Heart right ventricle (tissue), 16 donors: ENCODE measurements at regions of chr9 and their contacts with region 1.

Region 1: GRCh38 chr9:99353408-99353807 is 131.3 kb downstream of the SEC61B start:
- DNase-seq: no peak
- ATAC-seq: no peak
- H3K4me3 ChIP-seq: no peak overlapping the region
- H3K27ac ChIP-seq: peak overlapping the region in 1 of 10 donors; percentile 43
- H3K4me1 ChIP-seq: peaks cover 0 to 23% (median 12%) of the 10 kb centered on the region in 9 donors
- H3K27me3 ChIP-seq: no peaks in the 10 kb centered on the region
- CTCF ChIP-seq: no peak

Region 2: DNA sequence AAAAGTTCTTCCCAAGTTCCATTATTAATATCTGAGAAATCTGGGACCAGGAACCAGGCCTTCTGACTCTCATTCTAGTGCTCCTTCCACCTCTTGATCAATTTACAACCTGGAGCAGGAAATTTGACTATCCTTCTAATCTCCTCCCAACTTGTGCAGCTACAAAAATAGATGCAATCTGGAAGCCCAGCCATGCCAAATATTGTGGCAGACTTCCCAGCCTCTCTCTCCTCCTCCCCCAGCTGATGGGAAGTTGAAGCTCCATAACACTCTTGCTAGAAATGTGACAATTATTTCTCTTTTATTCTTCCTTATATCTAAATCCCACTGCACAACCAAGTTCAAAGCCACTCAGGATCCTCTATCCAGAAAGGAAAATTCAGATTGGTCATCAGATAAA is 120.8 kb after region 1 on chr9:
- intact Hi-C with region 1: loop called in 1 of 10 experiments (anchors 10 kb)
- DNase-seq: peak in 1 of 2 donors; percentile 33
- ATAC-seq: peak in 3 of 8 donors; percentile 44 to 67 (median 62)
- H3K4me3 ChIP-seq: no peak overlapping the region
- H3K27ac ChIP-seq: no peak overlapping the region
- H3K4me1 ChIP-seq: peaks cover 0 to 21% (median 0%) of the 10 kb centered on the region in 9 donors
- H3K27me3 ChIP-seq: no peaks in the 10 kb centered on the region
- CTCF ChIP-seq: no peak